ENCODE measurements at regions of chr6 and their contacts with region 1.

Region 1: DNA sequence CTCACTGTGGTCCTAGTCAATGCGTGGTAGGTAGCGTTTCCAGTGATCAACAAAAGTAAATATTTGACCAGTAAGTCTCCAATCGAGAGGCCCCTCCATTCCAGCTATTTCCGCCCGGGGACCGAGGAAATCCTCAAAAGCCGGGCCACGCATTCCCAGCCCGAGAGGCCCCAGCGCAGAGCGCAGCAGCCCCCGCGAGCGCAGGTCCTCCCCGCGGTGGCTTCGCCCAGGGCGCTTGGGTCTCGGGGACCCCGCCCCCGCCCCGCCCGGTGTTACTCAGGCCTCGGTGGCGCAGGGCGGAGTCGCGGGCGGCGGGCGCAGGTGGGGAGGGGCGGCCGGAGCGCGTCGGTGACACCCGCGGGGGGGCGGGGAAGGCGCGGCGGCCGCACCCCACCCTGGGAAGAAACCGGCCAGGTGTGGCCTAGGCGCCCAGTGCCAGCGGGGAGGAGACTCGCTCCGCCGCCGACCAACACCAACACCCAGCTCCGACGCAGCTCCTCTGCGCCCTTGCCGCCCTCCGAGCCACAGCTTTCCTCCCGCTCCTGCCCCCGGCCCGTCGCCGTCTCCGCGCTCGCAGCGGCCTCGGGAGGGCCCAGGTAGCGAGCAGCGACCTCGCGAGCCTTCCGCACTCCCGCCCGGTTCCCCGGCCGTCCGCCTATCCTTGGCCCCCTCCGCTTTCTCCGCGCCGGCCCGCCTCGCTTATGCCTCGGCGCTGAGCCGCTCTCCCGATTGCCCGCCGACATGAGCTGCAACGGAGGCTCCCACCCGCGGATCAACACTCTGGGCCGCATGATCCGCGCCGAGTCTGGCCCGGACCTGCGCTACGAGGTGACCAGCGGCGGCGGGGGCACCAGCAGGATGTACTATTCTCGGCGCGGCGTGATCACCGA is at the start of gene DSP:
- DNase-seq: peak; percentile 48
- ATAC-seq: peak; percentile 81
- H3K4me3 ChIP-seq: peak within 1 kb of the TSS; percentile 91 to 96
- H3K27ac ChIP-seq: peak within 1 kb of the TSS; percentile 93
- H3K4me1 ChIP-seq: peaks cover 14 to 34% of the 10 kb centered on the region in 2 experiments
- H3K27me3 ChIP-seq: no peaks in the 10 kb centered on the region
- CTCF ChIP-seq: no peak
- POLR2A ChIP-seq: peak; percentile 68
- RAD21 ChIP-seq: no peak
- total RNA-seq, gene DSP: 104 TPM

Region 2: DNA sequence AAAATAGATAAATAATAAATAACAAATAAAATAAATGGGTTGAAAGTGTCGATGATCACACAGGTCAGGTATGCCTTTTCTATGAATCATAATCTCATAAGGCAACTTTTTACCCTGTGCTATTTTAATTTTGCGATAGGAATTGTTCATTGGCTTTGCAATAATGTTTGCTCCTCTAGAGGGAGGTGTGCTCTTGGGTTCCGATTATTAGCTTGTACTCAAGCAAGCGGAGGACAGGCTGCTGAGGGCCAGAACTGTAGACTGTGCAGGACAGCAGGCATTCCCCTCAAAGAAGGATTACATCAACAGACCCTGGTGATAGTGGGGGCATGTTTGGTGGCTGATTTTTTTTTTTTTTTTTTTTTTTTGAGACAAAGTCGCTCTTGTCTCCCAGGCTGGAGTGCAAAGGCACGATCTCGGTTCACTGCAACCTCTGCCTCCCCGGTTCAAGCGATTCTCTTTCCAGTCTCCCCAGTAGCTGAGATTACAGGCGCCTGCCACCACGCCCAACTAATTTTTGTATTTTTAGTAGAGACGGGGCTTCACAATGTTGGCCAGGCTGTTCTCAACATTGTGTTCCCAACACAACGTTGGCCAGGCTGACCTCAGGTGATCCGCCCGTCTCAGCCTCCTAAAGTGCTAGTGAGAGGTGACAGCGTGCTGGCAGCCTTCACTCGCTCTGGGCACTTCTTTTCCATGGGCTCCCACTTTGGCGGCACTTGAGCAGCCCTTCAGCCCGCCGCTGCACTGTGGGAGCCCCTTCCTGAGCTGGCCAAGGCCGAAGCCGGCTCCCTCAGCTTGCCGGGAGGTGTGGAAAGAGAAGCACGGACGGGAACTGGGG is 116.2 kb before region 1 on chr6:
- CTCF ChIA-PET with region 1: interaction called, 5 read pairs
- POLR2A ChIA-PET with region 1: no interaction called
- RAD21 ChIA-PET with region 1: no interaction called
- intact Hi-C with region 1: loop called (anchors 5 kb)
- DNase-seq: peak; percentile 24
- ATAC-seq: peak; percentile 73
- H3K4me3 ChIP-seq: no peak overlapping the region
- H3K27ac ChIP-seq: no peak overlapping the region
- H3K4me1 ChIP-seq: peaks cover 0 to 12% of the 10 kb centered on the region in 2 experiments; a peak in 1 of 4 replicates
- H3K27me3 ChIP-seq: no peaks in the 10 kb centered on the region
- CTCF ChIP-seq: peak; percentile 55 to 61 (median 61); a peak in 5 of 6 replicates
- POLR2A ChIP-seq: no peak
- RAD21 ChIP-seq: peak; percentile 89

Region 3: DNA sequence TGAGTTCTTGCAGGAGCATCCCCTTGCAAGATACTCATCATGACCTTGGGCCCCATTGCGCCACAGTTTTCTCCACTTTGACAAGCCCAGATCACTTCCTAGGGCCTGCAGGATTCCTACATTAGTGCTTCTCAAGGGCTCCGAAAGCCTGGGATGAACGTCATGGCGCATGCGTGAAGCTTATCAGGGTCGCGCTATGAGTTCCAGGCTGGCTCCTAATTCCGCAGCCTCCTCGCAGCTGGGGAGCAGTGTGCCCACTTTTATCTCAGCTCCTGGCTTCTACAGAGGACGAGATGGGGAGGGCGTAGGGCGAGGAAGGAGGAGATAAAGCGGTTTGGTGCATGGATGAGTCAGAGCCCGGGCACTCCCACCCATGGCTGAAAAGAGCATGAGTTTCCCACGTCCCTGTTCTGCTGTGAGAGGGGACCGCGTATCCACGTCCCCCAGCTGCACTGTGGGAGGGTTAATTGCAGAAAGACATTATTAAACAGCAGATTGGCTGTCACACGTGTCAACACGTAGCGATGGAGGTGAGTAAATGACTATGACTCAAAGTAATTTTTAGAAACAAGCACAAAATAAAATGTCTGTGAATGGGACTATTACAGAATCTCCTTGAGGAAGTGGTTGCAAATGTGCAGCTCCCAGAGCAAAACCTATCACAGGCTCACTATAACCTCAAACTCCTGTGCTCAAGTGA is 72.9 kb before region 1 on chr6:
- CTCF ChIA-PET with region 1: no interaction called
- POLR2A ChIA-PET with region 1: no interaction called
- RAD21 ChIA-PET with region 1: no interaction called
- intact Hi-C with region 1: loop called (anchors 5 kb)
- DNase-seq: peak; percentile 18
- ATAC-seq: peak; percentile 86
- H3K4me3 ChIP-seq: peak overlapping the region; percentile 33 to 53
- H3K27ac ChIP-seq: no peak overlapping the region
- H3K4me1 ChIP-seq: peaks cover 14 to 28% of the 10 kb centered on the region in 2 experiments
- H3K27me3 ChIP-seq: no peaks in the 10 kb centered on the region
- CTCF ChIP-seq: no peak
- POLR2A ChIP-seq: peak; percentile 26
- RAD21 ChIP-seq: peak; percentile 22; the same call in 1 of the 2 replicates

Region 4: GRCh38 chr6:7505187-7505811 is 36.1 kb before region 1 on chr6:
- CTCF ChIA-PET with region 1: no interaction called
- POLR2A ChIA-PET with region 1: interaction called, 3 read pairs
- RAD21 ChIA-PET with region 1: interaction called in 1 of 2 experiments, 3 read pairs
- intact Hi-C with region 1: loop called (anchors 1 kb)
- DNase-seq: peak; percentile 98
- ATAC-seq: peak; percentile 96
- H3K4me3 ChIP-seq: peak overlapping the region; percentile 15 to 52
- H3K27ac ChIP-seq: peak overlapping the region; percentile 52
- H3K4me1 ChIP-seq: peaks cover 24 to 44% of the 10 kb centered on the region in 2 experiments
- H3K27me3 ChIP-seq: no peaks in the 10 kb centered on the region
- CTCF ChIP-seq: no peak
- POLR2A ChIP-seq: no peak
- RAD21 ChIP-seq: peak; percentile 58

Measured in HCT116 (cell line).